ENCODE measurements at regions of chr10 and their contacts with region 1.

Region 1: DNA sequence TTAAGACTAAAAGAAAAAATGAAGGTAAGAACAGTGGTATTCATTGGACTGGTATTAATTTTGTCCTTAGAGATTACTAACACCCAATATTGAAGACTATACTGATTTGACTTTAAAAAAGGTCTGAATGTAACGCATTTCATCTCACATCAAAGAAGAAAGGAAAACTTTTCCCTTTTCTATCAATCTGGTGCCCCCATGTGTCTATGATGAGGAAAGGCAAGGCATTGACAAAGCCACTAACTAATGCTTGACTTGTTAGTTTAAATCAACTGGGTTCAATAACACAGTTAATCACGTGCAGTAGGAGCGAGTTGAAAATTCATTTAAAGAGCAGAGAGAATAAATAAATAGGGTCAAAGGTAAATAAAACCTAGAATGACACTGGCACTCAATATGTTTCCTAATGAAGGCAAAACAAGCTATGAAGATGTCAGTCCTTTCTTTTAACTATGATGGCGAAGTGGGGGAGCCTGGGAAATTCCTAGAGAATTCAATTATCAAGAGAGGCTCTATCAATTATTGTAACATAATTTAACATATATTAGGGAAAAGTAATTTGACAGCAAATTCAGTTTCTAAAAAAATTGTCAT is 180.9 kb downstream of the ANK3 start:
- DNase-seq: peak; percentile 36
- ATAC-seq: no peak
- H3K4me3 ChIP-seq: no peak overlapping the region
- H3K4me3 Mint-ChIP-seq: no peak overlapping the region
- H3K27ac ChIP-seq: no peak overlapping the region
- H3K27ac Mint-ChIP-seq: no peak overlapping the region
- H3K4me1 ChIP-seq: peaks cover 14 to 26% of the 10 kb centered on the region in 2 donors
- H3K4me1 Mint-ChIP-seq: peaks cover 37% of the 10 kb centered on the region
- H3K27me3 ChIP-seq: no peaks in the 10 kb centered on the region
- H3K27me3 Mint-ChIP-seq: no peaks in the 10 kb centered on the region
- CTCF ChIP-seq: peak; percentile 67

Region 2: GRCh38 chr10:60114765-60115586 is 93.8 kb before region 1 on chr10:
- CTCF ChIA-PET with region 1: interaction called, 34 read pairs
- POLR2A ChIA-PET with region 1: interaction called, 4 read pairs
- intact Hi-C with region 1: loop called (anchors 1 kb)
- DNase-seq: peak; percentile 61
- ATAC-seq: peak; percentile 53
- H3K4me3 ChIP-seq: no peak overlapping the region
- H3K4me3 Mint-ChIP-seq: no peak overlapping the region
- H3K27ac ChIP-seq: no peak overlapping the region
- H3K27ac Mint-ChIP-seq: no peak overlapping the region
- H3K4me1 ChIP-seq: peaks cover 4 to 6% of the 10 kb centered on the region in 2 donors
- H3K4me1 Mint-ChIP-seq: no peaks in the 10 kb centered on the region
- H3K27me3 ChIP-seq: no peaks in the 10 kb centered on the region
- H3K27me3 Mint-ChIP-seq: no peaks in the 10 kb centered on the region
- CTCF ChIP-seq: peak; percentile 68

Region 3: DNA sequence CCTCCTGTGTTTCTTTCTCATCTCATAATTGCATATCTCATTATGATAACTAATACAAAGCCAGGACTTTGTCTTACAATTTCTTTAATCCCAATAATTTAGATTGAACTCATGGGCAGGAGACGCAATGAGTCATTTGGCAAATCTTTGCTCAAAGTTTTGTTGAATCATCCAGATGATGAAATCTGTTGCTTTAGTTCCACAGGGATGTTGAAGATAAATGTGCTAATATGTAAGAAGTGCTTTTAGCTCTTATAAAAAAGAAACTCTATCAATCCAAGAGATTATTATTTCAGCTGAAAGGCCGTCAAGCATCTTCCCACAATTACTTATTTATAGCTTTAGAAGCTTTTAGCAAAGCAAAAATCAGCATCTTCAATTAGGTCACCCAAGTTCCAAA is 217.6 kb after region 1 on chr10:
- CTCF ChIA-PET with region 1: interaction called, 26 read pairs
- POLR2A ChIA-PET with region 1: no interaction called
- intact Hi-C with region 1: no loop called
- DNase-seq: no peak
- ATAC-seq: no peak
- H3K4me3 ChIP-seq: no peak overlapping the region
- H3K4me3 Mint-ChIP-seq: no peak overlapping the region
- H3K27ac ChIP-seq: no peak overlapping the region
- H3K27ac Mint-ChIP-seq: no peak overlapping the region
- H3K4me1 ChIP-seq: peaks cover 0 to 9% of the 10 kb centered on the region in 2 donors
- H3K4me1 Mint-ChIP-seq: peaks cover 6% of the 10 kb centered on the region
- H3K27me3 ChIP-seq: no peaks in the 10 kb centered on the region
- H3K27me3 Mint-ChIP-seq: no peaks in the 10 kb centered on the region
- CTCF ChIP-seq: no peak

Region 4: GRCh38 chr10:60434418-60435046 is 225.8 kb after region 1 on chr10:
- CTCF ChIA-PET with region 1: interaction called, 46 read pairs
- POLR2A ChIA-PET with region 1: no interaction called
- intact Hi-C with region 1: loop called (anchors 1 kb)
- DNase-seq: peak; percentile 61
- ATAC-seq: peak; percentile 56
- H3K4me3 ChIP-seq: no peak overlapping the region
- H3K4me3 Mint-ChIP-seq: no peak overlapping the region
- H3K27ac ChIP-seq: no peak overlapping the region
- H3K27ac Mint-ChIP-seq: no peak overlapping the region
- H3K4me1 ChIP-seq: no peaks in the 10 kb centered on the region
- H3K4me1 Mint-ChIP-seq: peaks cover 7% of the 10 kb centered on the region
- H3K27me3 ChIP-seq: no peaks in the 10 kb centered on the region
- H3K27me3 Mint-ChIP-seq: no peaks in the 10 kb centered on the region
- CTCF ChIP-seq: peak; percentile 77

Region 5: DNA sequence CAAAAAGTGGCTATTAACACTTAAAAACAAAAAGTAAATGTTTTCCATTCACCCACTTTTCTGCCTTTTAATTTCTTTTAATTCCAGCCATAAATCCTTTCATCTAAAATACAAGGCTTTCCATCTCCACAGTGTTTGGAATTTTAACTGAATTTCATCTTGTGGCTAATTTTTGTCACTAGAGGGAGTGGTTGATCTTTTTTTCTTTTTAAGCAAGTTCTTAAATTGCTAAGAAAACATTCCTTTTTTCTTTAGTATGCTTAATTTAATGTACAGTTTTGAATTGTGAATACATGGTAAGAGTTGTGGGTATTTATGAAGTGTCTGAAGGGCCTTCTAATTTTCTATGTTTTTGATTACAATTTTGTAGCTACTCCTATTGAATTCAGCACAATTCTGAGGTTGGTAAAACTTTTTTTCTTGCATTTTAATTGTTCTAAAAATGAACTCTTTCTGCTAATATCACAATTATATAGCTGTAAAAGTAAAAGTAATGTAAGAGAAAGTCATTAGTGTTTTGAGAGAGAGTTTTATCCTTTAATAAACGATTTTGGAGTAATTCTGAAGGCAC is 235.8 kb after region 1 on chr10:
- CTCF ChIA-PET with region 1: interaction called, 12 read pairs
- POLR2A ChIA-PET with region 1: no interaction called
- intact Hi-C with region 1: no loop called
- DNase-seq: no peak
- ATAC-seq: no peak
- H3K4me3 ChIP-seq: no peak overlapping the region
- H3K4me3 Mint-ChIP-seq: no peak overlapping the region
- H3K27ac ChIP-seq: no peak overlapping the region
- H3K27ac Mint-ChIP-seq: no peak overlapping the region
- H3K4me1 ChIP-seq: peaks cover 7 to 8% of the 10 kb centered on the region in 2 donors
- H3K4me1 Mint-ChIP-seq: peaks cover 8% of the 10 kb centered on the region
- H3K27me3 ChIP-seq: no peaks in the 10 kb centered on the region
- H3K27me3 Mint-ChIP-seq: no peaks in the 10 kb centered on the region
- CTCF ChIP-seq: peak; percentile 27

Region 6: GRCh38 chr10:61179766-61180165 is 971.0 kb after region 1 on chr10:
- CTCF ChIA-PET with region 1: no interaction called
- POLR2A ChIA-PET with region 1: no interaction called
- intact Hi-C with region 1: no loop called
- DNase-seq: no peak
- ATAC-seq: no peak
- H3K4me3 ChIP-seq: no peak overlapping the region
- H3K4me3 Mint-ChIP-seq: no peak overlapping the region
- H3K27ac ChIP-seq: no peak overlapping the region
- H3K27ac Mint-ChIP-seq: no peak overlapping the region
- H3K4me1 ChIP-seq: no peaks in the 10 kb centered on the region
- H3K4me1 Mint-ChIP-seq: no peaks in the 10 kb centered on the region
- H3K27me3 ChIP-seq: no peaks in the 10 kb centered on the region
- H3K27me3 Mint-ChIP-seq: peaks cover 7% of the 10 kb centered on the region
- CTCF ChIP-seq: no peak

Measured in B cell (primary cell).